Activated B cell treated with CpG ODN at 0.5 μM for 24 hours (primary cell): ENCODE measurements at regions of chr10 and their contacts with region 1.

Region 1: DNA sequence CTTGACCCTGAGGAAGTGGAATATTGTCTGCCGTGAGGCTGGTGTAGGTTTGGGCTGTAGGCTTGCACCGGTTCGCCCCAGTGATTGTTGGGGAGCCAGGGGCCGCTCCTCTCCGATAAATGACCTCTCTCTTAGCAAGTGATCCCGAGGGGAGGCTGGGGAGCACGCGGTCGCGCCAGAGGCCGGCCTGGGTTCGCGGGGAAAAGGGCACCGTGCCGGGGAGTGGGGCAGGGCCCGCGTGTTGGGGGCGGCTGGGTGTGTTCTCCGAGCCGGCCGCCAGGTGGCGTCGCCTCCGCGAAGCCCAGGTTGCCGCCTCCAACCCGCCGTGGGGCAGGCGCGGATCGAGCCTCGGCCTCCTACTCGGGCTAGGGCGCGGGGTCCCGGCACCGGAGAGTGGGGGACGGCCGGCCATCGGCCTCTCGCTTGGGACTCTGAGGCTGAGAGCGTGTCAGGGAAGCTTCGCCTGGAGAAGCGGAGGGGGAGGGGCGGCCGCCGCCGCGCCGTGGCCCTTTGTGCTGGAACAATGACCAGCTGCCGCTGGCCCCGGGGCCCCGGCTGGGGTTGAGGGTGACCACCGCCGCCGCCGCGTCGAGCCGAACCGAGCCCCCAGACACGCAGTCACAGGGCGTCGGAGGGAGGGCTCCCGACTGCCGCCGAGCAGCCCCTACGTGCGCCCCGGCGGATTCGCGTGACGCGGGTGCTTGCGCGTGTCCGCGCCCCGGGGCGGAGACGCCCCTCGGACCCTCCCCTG is 442 bp upstream of the LZTS2 start:
- DNase-seq: peak; percentile 85
- ATAC-seq: peak; percentile 63
- H3K4me3 Mint-ChIP-seq: peak overlapping the region; percentile 87
- H3K27ac Mint-ChIP-seq: peak overlapping the region; percentile 88
- H3K4me1 Mint-ChIP-seq: peaks cover 30% of the 10 kb centered on the region
- H3K27me3 Mint-ChIP-seq: no peaks in the 10 kb centered on the region
- CTCF ChIP-seq: peak; percentile 80

Region 2: DNA sequence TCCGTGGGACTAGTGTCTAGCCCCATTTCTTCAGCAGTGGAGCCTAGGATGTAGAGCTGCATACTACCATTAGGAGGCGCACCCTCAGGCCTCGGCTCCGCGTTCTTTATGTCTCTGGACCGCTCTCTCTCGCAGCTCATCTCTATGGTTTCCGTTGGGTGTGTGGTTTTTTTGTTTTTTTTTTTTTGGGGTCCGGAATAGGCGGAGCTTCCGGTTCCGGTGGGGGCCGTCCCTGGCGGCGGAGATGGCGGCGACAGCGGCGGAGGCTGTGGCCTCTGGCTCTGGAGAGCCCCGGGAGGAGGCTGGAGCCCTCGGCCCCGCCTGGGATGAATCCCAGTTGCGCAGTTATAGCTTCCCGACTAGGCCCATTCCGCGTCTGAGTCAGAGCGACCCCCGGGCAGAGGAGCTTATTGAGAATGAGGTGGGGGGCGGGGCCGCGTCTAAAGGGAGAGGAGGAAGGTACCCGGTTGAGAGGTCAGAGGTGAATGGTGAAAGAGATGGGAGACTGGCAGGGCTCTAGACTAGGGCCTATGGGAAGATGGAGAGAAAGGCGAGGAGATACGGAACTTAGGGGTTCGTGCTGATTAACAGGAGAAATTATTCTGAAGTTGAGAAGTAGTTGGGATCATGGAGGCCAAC is 463.3 kb before region 1 on chr10 and contains the start of gene HIF1AN:
- CTCF ChIA-PET with region 1: no interaction called
- POLR2A ChIA-PET with region 1: interaction called, 4 read pairs
- intact Hi-C with region 1: loop called (anchors 5 kb)
- DNase-seq: peak; percentile 79
- ATAC-seq: peak; percentile 100
- H3K4me3 Mint-ChIP-seq: no peak within 1 kb of the TSS
- H3K27ac Mint-ChIP-seq: no peak within 1 kb of the TSS
- H3K4me1 Mint-ChIP-seq: peaks cover 14% of the 10 kb centered on the region
- H3K27me3 Mint-ChIP-seq: no peaks in the 10 kb centered on the region
- CTCF ChIP-seq: peak; percentile 3
- total RNA-seq, gene HIF1AN: 55.8 and 59.9 TPM in 2 replicates

Region 3: GRCh38 chr10:100912605-100913469 is 86.3 kb before region 1 on chr10 and contains the start of gene SLF2:
- CTCF ChIA-PET with region 1: no interaction called
- POLR2A ChIA-PET with region 1: interaction called, 6 read pairs
- intact Hi-C with region 1: loop called (anchors 2 kb)
- DNase-seq: peak; percentile 82
- ATAC-seq: peak; percentile 97
- H3K4me3 Mint-ChIP-seq: peak within 1 kb of the TSS; percentile 99
- H3K27ac Mint-ChIP-seq: peak within 1 kb of the TSS; percentile 96
- H3K4me1 Mint-ChIP-seq: peaks cover 33% of the 10 kb centered on the region
- H3K27me3 Mint-ChIP-seq: no peaks in the 10 kb centered on the region
- CTCF ChIP-seq: no peak
- total RNA-seq, gene SLF2: 29.9 and 35.5 TPM in 2 replicates

Region 4: DNA sequence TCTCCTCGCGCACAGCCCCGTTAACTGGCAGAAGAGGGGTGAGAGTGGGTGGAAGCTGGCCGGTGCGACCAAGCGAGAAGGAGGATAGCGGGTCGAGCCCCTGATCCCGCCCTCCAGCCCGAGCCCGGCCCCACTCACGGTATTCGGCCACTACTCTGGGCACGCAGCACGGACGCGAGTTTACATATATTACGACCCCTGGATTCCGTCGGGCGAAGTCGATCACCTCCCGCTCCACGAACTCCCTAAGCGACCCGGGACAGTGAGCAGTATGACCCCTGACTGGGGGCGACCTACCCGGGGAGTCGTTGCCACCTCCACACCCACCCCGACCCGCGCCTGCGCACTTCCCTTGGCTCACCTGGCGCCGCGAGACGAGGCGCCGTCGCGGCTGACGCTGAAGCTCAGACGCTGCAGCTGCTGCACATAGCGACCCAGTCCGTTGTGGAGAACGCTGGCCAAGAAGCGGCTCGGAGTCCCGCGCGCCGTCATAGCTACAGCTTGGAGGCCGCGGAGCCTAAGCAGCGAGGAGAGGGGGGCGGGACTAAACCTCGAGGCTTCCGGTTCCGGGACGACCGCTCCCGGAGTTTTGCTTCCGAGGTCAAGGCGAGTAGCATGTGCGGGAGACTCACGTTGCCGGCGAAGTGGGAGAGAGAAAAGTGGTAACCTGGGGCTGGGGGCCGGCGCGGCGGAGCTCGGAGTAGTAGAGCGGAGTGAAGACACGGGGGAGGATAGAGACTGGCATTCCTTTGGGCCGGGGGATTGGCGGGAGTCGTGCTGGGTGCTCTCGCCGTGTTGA is 12.0 kb before region 1 on chr10 and contains the starts of genes MRPL43 and TWNK:
- CTCF ChIA-PET with region 1: interaction called, 34 read pairs
- POLR2A ChIA-PET with region 1: interaction called, 54 read pairs
- intact Hi-C with region 1: loop called (anchors 1 kb)
- DNase-seq: peak; percentile 81
- ATAC-seq: peak; percentile 95
- H3K4me3 Mint-ChIP-seq: peak within 1 kb of the TSS; percentile 92
- H3K27ac Mint-ChIP-seq: peak within 1 kb of the TSS; percentile 82
- H3K4me1 Mint-ChIP-seq: peaks cover 46% of the 10 kb centered on the region
- H3K27me3 Mint-ChIP-seq: no peaks in the 10 kb centered on the region
- CTCF ChIP-seq: no peak
- total RNA-seq, gene MRPL43: 44.2 and 46.3 TPM in 2 replicates
- total RNA-seq, gene TWNK: 19.2 and 20.5 TPM in 2 replicates

Region 5: DNA sequence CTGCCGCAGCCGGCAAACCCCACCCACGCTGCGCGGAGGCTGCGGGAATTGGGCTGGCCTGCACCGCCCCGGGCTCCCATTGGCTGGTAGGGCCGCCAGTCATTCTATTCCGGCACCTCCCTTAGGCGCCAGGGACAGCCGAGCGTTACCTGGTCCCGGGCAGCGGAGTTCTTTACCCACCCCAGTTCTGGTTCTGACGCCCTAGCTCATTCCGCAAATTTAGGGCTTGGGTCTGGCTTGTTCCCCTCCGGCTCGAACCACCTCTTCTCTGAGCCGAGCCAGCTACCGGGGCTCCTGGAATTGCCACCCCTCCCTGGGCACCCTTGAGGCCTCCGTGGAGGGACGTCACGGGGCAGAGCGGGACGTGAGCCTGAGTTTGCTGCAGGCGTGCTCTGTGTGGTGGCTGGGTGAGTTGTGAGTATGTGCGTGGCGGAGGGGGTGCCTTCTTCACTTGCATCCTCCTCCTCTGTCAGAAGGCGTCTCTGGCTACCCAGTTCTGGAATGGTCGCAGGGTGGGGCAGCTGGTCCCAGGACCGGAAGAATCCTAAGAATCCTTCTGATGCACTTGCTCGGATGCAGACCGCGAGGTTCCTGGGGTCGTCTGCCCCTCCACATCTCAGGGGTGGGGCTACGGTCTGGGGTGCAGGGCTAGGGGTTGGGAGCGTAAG is 32.1 kb after region 1 on chr10 and contains the starts of genes PDZD7 and SFXN3:
- CTCF ChIA-PET with region 1: interaction called, 4 read pairs
- POLR2A ChIA-PET with region 1: interaction called, 7 read pairs
- intact Hi-C with region 1: loop called (anchors 2 kb)
- DNase-seq: peak; percentile 93
- ATAC-seq: peak; percentile 91
- H3K4me3 Mint-ChIP-seq: peak within 1 kb of the TSS; percentile 92
- H3K27ac Mint-ChIP-seq: peak within 1 kb of the TSS; percentile 69
- H3K4me1 Mint-ChIP-seq: peaks cover 20% of the 10 kb centered on the region
- H3K27me3 Mint-ChIP-seq: peaks cover 19% of the 10 kb centered on the region
- CTCF ChIP-seq: no peak
- total RNA-seq, gene PDZD7: 0.11 TPM in 1 of 2 replicates, not detected in the other
- total RNA-seq, gene SFXN3: 9.5 and 9.8 TPM in 2 replicates

Region 6: DNA sequence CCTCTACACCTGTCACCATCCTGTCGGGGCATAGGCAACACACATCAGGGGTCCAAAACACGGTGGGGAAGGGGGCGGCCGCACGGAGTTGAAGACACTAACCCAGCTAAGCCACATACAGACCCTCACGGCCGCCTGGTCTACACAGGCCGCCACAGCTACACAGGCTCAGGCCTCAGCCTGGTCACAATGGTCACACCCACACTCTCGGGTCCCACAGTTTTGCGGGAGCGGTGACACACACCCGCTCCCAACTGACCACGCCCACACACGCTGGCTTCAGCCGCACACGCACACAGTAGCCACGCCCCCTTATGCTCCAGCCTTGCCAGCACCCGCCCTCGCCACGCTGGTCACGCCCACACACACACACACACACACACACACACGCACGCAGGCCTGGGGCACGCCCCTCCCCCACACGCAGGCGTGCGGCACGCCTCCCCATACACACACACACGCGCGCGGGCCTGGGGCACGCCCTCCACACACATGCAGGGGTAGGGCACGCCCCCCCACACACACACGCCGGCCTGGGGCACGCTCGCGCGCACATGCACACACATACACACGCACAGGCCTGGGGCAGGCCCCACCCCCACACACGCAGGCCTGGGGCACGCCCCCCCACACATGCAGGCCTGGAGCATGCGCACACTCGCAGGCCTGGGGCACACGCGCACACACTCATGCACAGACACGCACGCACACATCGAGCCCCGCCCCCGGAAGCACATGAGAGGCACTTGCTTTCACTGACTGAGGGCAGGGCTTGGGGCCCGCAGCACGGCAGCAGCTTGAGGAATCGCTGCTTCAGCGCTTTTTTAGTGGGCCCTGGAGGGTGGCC is 831.4 kb after region 1 on chr10:
- CTCF ChIA-PET with region 1: no interaction called
- POLR2A ChIA-PET with region 1: no interaction called
- intact Hi-C with region 1: loop called (anchors 5 kb)
- DNase-seq: peak; percentile 89
- ATAC-seq: peak; percentile 75
- H3K4me3 Mint-ChIP-seq: peak overlapping the region; percentile 80
- H3K27ac Mint-ChIP-seq: peak overlapping the region; percentile 97
- H3K4me1 Mint-ChIP-seq: peaks cover 41% of the 10 kb centered on the region
- H3K27me3 Mint-ChIP-seq: no peaks in the 10 kb centered on the region
- CTCF ChIP-seq: no peak